Activated B cell treated with CpG ODN at 0.5 μM for 24 hours (primary cell): ENCODE measurements at regions of chr1 and their contacts with region 1.

Region 1: DNA sequence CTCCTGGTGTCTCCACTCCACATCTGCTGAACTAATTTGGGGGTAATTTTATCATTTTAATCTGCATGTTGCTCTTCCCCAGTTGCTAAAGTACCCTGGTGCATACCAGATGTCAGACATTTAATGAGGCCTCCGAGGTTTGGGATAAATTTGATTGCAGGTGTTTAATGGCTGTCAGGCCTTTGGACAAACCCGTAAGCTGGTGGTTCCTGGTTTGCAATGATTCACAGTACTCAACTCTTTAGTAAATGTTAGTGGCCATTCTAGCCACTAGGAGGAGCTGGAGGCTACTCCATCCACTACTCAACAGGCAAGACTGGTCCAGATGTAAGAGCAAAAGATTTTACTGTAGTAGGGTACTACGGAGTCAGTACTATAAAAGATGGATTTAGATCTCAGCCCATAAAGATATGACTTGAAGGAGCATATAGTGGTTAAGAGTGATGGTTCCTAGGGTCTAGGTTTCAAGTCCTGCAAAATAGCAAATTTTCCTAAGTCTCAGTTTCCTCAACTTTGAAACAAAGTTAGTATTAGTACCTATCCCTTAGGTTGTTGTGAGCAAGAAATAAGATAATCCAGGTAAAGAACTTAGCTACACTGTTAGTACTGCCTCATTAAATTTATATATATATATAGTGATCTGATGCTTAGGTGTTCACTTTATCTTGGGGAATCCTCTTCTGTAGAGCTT is 132.8 kb downstream of the SNX7 start:
- DNase-seq: no peak
- ATAC-seq: peak; percentile 77
- H3K4me3 Mint-ChIP-seq: no peak overlapping the region
- H3K27ac Mint-ChIP-seq: no peak overlapping the region
- H3K4me1 Mint-ChIP-seq: peaks cover 2% of the 10 kb centered on the region
- H3K27me3 Mint-ChIP-seq: no peaks in the 10 kb centered on the region
- CTCF ChIP-seq: no peak

Region 2: GRCh38 chr1:98870959-98871903 is 76.9 kb after region 1 on chr1:
- CTCF ChIA-PET with region 1: no interaction called
- POLR2A ChIA-PET with region 1: no interaction called
- intact Hi-C with region 1: loop called (anchors 5 kb)
- DNase-seq: no peak
- ATAC-seq: peak; percentile 95
- H3K4me3 Mint-ChIP-seq: peak overlapping the region; percentile 74
- H3K27ac Mint-ChIP-seq: peak overlapping the region; percentile 89
- H3K4me1 Mint-ChIP-seq: peaks cover 22% of the 10 kb centered on the region
- H3K27me3 Mint-ChIP-seq: no peaks in the 10 kb centered on the region
- CTCF ChIP-seq: no peak

Region 3: GRCh38 chr1:99004254-99004859 is 210.0 kb after region 1 on chr1:
- CTCF ChIA-PET with region 1: no interaction called
- POLR2A ChIA-PET with region 1: no interaction called
- intact Hi-C with region 1: loop called (anchors 10 kb)
- DNase-seq: peak; percentile 12
- ATAC-seq: no peak
- H3K4me3 Mint-ChIP-seq: no peak overlapping the region
- H3K27ac Mint-ChIP-seq: no peak overlapping the region
- H3K4me1 Mint-ChIP-seq: peaks cover 2% of the 10 kb centered on the region
- H3K27me3 Mint-ChIP-seq: peaks cover 25% of the 10 kb centered on the region
- CTCF ChIP-seq: no peak

Region 4: DNA sequence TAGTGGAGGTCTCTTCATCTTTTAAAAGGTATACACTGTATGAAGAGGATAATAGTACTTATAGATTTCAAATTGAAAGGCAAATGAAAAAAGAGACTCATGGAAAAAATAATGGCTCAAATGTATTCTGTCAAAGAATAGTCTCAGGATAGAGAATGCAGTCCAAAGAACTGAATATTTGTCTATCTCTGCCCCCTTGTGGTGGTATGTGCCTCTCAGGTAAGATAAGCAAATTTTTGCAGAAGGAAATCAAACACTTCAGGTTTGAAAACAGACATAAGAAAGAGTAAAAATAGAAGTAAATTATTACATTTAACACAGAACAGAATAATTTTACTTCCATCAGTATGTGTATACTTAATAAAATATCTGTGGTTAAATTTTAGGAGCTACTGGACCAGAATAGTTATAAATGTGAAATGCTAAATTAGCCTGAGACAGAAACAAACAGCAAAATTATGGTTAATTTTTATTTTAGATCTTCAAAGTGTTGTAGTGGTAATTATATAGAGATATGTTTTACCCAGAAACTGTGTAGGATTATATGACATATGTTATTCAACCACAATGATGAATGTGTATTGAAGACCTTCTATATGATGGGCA is 687.2 kb after region 1 on chr1:
- CTCF ChIA-PET with region 1: interaction called, 16 read pairs
- POLR2A ChIA-PET with region 1: no interaction called
- intact Hi-C with region 1: loop called (anchors 1 kb)
- DNase-seq: no peak
- ATAC-seq: no peak
- H3K4me3 Mint-ChIP-seq: no peak overlapping the region
- H3K27ac Mint-ChIP-seq: no peak overlapping the region
- H3K4me1 Mint-ChIP-seq: no peaks in the 10 kb centered on the region
- H3K27me3 Mint-ChIP-seq: no peaks in the 10 kb centered on the region
- CTCF ChIP-seq: peak; percentile 62

Region 5: DNA sequence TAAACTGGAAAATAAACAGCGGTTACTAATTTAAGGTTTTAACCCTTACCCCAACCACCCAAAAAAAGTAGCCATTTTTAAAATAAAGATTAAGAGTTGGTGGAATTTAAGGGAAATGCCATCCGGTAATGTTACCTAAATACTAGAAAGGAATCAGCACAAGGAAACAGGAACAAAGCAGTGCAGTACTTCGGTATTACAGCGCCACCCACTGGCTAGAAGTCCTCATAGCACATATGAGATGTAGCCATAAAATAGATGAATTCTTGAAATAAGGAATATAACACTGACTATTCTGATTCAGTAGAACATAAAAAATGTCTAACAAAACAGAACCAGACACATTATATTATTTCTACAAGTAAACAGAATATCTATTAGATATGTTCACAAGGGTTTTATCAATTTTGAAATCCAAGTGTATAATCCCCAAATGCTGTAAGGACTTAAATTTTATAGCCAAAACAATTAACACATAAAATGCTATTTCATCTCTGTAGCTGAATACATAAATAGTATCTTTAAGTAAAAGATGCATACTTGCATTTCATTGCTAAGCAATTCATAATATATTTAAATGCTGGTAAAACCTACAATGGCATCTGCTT is 913.3 kb after region 1 on chr1:
- CTCF ChIA-PET with region 1: interaction called, 5 read pairs
- POLR2A ChIA-PET with region 1: no interaction called
- intact Hi-C with region 1: loop called (anchors 1 kb)
- DNase-seq: no peak
- ATAC-seq: peak; percentile 34
- H3K4me3 Mint-ChIP-seq: no peak overlapping the region
- H3K27ac Mint-ChIP-seq: no peak overlapping the region
- H3K4me1 Mint-ChIP-seq: peaks cover 4% of the 10 kb centered on the region
- H3K27me3 Mint-ChIP-seq: no peaks in the 10 kb centered on the region
- CTCF ChIP-seq: peak; percentile 7